Calu3 (cell line): ENCODE measurements at regions of chr1 and their contacts with region 1.

Region 1: DNA sequence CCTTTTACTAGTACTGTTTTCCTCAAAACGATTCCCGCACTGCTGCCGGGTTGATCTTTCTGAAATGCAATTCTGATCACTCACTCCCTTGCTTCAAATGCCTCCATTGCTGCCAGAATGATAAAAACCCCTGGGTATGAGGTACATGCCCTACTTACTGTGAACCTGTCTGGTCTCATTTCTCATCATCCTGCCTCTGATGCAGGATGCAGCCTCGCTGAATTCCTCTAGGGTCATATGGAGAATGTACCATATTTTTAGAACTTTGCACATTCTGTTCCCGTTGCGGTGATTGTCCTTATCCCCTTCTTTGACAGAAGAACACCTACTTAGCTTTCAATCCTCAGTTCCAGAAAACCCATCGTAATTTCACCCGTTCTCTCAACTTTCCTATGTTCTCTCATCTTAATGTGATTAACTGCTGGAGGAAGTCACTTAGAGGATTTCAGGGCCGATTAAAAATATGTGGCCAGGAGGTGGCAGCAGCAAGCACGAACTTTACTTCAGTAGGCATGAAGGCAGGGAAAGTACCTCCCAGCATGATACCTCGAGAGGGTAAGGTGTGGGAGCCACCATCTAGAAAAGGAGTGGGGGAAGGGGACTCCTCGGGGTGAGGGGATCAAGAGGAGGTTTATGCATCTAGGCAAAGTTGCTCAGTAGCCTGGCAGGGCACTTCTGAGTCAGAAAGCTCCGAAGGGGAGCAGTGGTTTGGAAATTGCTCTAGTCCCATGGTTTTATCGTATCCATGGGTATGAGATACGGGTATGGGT is 361.5 kb upstream of the ZP4 start:
- DNase-seq: peak; percentile 77
- H3K4me3 Mint-ChIP-seq: no peak overlapping the region
- H3K27ac Mint-ChIP-seq: peak overlapping the region; percentile 12
- H3K4me1 Mint-ChIP-seq: peaks cover 10% of the 10 kb centered on the region
- H3K27me3 Mint-ChIP-seq: no peaks in the 10 kb centered on the region
- CTCF ChIP-seq: peak; percentile 46

Region 2: GRCh38 chr1:237748171-237748960 is 503.9 kb before region 1 on chr1:
- CTCF ChIA-PET with region 1: no interaction called
- intact Hi-C with region 1: no loop called
- DNase-seq: peak; percentile 5
- H3K4me3 Mint-ChIP-seq: no peak overlapping the region
- H3K27ac Mint-ChIP-seq: no peak overlapping the region
- H3K4me1 Mint-ChIP-seq: peaks cover 13% of the 10 kb centered on the region
- H3K27me3 Mint-ChIP-seq: no peaks in the 10 kb centered on the region
- CTCF ChIP-seq: no peak

Region 3: GRCh38 chr1:237851210-237851845 is 400.9 kb before region 1 on chr1:
- CTCF ChIA-PET with region 1: no interaction called
- intact Hi-C with region 1: loop called (anchors 2 kb)
- DNase-seq: peak; percentile 84
- H3K4me3 Mint-ChIP-seq: no peak overlapping the region
- H3K27ac Mint-ChIP-seq: no peak overlapping the region
- H3K4me1 Mint-ChIP-seq: peaks cover 7% of the 10 kb centered on the region
- H3K27me3 Mint-ChIP-seq: no peaks in the 10 kb centered on the region
- CTCF ChIP-seq: no peak